ENCODE measurements at regions of chr2 and their contacts with region 1.

Region 1: GRCh38 chr2:172465417-172466334 is 38.3 kb downstream of the ITGA6 start:
- DNase-seq: peak; percentile 91
- H3K4me3 Mint-ChIP-seq: peak overlapping the region; percentile 53
- H3K27ac Mint-ChIP-seq: peak overlapping the region; percentile 75
- H3K4me1 Mint-ChIP-seq: peaks cover 74% of the 10 kb centered on the region
- H3K27me3 Mint-ChIP-seq: no peaks in the 10 kb centered on the region

Region 2: GRCh38 chr2:171598713-171599319 is 866.9 kb before region 1 on chr2:
- CTCF ChIA-PET with region 1: no interaction called
- intact Hi-C with region 1: loop called (anchors 5 kb)
- DNase-seq: peak; percentile 72
- H3K4me3 Mint-ChIP-seq: no peak overlapping the region
- H3K27ac Mint-ChIP-seq: no peak overlapping the region
- H3K4me1 Mint-ChIP-seq: no peaks in the 10 kb centered on the region
- H3K27me3 Mint-ChIP-seq: no peaks in the 10 kb centered on the region

Region 3: DNA sequence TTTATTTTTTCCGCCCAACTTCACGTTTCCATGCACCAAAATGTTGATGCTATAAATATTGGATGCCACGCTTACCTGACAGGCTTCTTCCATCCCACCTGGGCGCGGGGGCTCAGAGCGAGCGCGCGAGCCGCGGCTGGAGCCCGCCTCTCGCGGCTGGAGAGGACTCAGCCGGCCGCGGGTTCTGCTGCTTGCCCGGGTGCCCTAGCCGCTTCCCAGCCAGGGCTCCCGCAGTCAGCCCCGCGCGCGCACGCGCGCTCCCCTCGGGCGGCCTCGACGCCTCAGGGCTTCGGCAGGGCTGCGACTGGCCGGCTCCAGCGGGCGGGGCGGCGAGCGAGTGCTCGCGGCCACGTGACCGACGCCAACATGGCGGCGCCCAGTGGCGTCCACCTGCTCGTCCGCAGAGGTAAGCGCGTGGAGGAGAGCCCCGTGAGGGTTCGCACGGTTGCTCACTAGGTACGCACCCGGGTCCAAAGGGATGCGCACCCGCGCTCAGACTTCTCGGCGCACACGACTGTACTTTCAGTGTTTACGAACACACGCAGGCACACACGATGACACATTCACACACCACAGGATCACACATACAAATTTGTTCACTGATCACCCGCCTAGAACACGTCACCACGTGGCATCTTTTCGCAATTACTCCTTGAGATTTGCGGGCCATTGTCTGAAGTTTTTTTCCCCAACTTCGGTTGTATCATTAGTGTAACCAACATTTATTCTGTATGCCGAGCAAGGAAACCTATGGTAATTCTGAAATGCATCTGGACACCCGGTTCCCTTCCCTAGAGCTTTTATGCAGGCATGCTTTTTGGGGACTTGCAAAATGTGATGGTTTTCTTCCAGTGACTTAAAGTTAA is 465.8 kb before region 1 on chr2 and contains the start of gene METAP1D:
- CTCF ChIA-PET with region 1: no interaction called
- intact Hi-C with region 1: loop called (anchors 10 kb)
- DNase-seq: peak; percentile 88
- H3K4me3 Mint-ChIP-seq: peak within 1 kb of the TSS; percentile 94
- H3K27ac Mint-ChIP-seq: peak within 1 kb of the TSS; percentile 89
- H3K4me1 Mint-ChIP-seq: peaks cover 25% of the 10 kb centered on the region
- H3K27me3 Mint-ChIP-seq: no peaks in the 10 kb centered on the region
- total RNA-seq, gene METAP1D: 2.5 to 3.4 TPM

Region 4: GRCh38 chr2:172226244-172227061 is 239.2 kb before region 1 on chr2:
- CTCF ChIA-PET with region 1: interaction called, 12 read pairs
- intact Hi-C with region 1: loop called (anchors 1 kb)
- DNase-seq: peak; percentile 64
- H3K4me3 Mint-ChIP-seq: no peak overlapping the region
- H3K27ac Mint-ChIP-seq: no peak overlapping the region
- H3K4me1 Mint-ChIP-seq: peaks cover 30% of the 10 kb centered on the region
- H3K27me3 Mint-ChIP-seq: no peaks in the 10 kb centered on the region

Region 5: GRCh38 chr2:172285010-172285621 is 180.6 kb before region 1 on chr2:
- CTCF ChIA-PET with region 1: interaction called, 12 read pairs
- intact Hi-C with region 1: no loop called
- DNase-seq: no peak
- H3K4me3 Mint-ChIP-seq: no peak overlapping the region
- H3K27ac Mint-ChIP-seq: no peak overlapping the region
- H3K4me1 Mint-ChIP-seq: peaks cover 31% of the 10 kb centered on the region
- H3K27me3 Mint-ChIP-seq: peaks cover 3% of the 10 kb centered on the region

Region 6: GRCh38 chr2:172449911-172450550 is 15.6 kb before region 1 on chr2:
- CTCF ChIA-PET with region 1: interaction called, 118 read pairs
- intact Hi-C with region 1: loop called (anchors 1 kb)
- DNase-seq: peak; percentile 61
- H3K4me3 Mint-ChIP-seq: peak overlapping the region; percentile 0
- H3K27ac Mint-ChIP-seq: peak overlapping the region; percentile 1
- H3K4me1 Mint-ChIP-seq: peaks cover 76% of the 10 kb centered on the region
- H3K27me3 Mint-ChIP-seq: no peaks in the 10 kb centered on the region

Region 7: GRCh38 chr2:172507199-172507598 is 41.5 kb after region 1 on chr2:
- CTCF ChIA-PET with region 1: no interaction called
- intact Hi-C with region 1: no loop called
- DNase-seq: no peak
- H3K4me3 Mint-ChIP-seq: no peak overlapping the region
- H3K27ac Mint-ChIP-seq: no peak overlapping the region
- H3K4me1 Mint-ChIP-seq: peaks cover 34% of the 10 kb centered on the region
- H3K27me3 Mint-ChIP-seq: no peaks in the 10 kb centered on the region

Region 8: DNA sequence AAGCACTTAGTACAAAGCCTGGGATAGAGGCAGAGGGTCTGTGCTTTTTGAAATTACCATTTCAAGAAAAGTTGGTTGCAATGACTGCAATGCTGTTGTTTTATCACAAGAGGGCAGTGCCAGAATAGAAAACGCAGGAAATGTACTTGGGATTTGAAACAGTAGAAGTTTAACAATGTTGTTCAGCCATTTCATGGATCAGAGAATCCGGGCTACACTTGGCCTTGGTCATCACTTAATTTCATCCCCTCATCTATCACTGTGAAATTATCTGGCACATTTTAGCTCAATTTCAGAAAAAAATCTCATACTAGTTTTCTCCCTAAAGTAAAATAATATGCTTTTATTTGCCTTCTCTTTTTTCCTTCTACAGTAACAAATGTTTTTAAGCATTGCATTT is 340.8 kb after region 1 on chr2:
- CTCF ChIA-PET with region 1: no interaction called
- intact Hi-C with region 1: no loop called
- DNase-seq: peak; percentile 9
- H3K4me3 Mint-ChIP-seq: no peak overlapping the region
- H3K27ac Mint-ChIP-seq: no peak overlapping the region
- H3K4me1 Mint-ChIP-seq: no peaks in the 10 kb centered on the region
- H3K27me3 Mint-ChIP-seq: peaks cover 2% of the 10 kb centered on the region